Activated CD4-positive, alpha-beta memory T cell treated with anti-CD3 and anti-CD28 coated beads for 36 hours (primary cell): ENCODE measurements at regions of chr13 and their contacts with region 1.

Region 1: GRCh38 chr13:40666045-40666904 is at the start of gene FOXO1:
- DNase-seq: peak; percentile 91
- H3K4me3 Mint-ChIP-seq: peak within 1 kb of the TSS; percentile 91
- H3K27ac Mint-ChIP-seq: peak within 1 kb of the TSS; percentile 96
- H3K4me1 Mint-ChIP-seq: peaks cover 34% of the 10 kb centered on the region
- H3K27me3 Mint-ChIP-seq: no peaks in the 10 kb centered on the region
- total RNA-seq, gene FOXO1: 34.2 to 34.5 TPM

Region 2: DNA sequence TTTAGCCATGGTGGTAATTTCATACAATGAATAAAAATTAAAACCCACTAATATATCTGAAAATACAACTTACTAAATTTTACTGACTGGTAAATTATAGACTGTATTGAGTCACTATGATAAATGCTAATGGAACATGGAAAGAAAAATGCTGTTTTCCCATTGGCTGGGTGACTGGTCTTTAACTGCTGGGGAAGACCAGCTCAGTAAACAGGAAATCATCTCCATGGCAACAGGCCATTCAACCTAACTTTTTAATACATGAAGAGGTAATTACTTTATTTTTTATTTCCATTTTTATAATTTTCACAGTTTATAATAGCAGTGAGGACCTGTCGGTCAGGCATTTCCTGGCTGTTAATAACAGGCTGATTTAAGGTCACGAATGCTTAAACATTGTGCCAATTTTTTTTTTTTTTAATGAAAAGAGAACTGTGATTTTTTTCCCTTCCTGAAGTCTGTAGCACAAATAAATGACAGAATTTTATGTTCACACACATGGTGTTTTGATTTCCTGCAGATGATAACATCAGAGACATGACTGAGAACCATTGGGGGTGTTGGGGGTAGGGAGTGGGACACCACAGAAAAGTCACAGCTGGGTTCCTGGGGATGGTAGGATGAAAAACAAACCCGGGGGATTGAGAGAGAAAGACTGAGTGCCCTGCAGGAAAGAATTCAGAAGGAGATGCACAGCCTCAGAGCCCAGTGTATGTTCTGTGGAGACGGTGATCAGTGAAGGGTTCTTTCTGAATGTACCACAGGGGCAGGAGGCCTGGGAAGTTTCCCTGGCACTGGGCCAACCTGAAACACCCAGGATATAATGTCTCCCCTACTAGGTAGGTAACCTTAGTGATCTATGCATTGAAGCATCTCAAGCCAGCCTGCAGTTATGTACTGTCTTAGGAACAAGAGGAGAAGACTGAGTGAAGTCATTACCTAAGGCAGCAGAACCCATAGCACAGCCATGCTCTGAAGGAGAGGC is 713.7 kb before region 1 on chr13:
- CTCF ChIA-PET with region 1: no interaction called
- POLR2A ChIA-PET with region 1: no interaction called
- intact Hi-C with region 1: loop called (anchors 5 kb)
- DNase-seq: no peak
- H3K4me3 Mint-ChIP-seq: no peak overlapping the region
- H3K27ac Mint-ChIP-seq: no peak overlapping the region
- H3K4me1 Mint-ChIP-seq: peaks cover 44% of the 10 kb centered on the region
- H3K27me3 Mint-ChIP-seq: no peaks in the 10 kb centered on the region

Region 3: DNA sequence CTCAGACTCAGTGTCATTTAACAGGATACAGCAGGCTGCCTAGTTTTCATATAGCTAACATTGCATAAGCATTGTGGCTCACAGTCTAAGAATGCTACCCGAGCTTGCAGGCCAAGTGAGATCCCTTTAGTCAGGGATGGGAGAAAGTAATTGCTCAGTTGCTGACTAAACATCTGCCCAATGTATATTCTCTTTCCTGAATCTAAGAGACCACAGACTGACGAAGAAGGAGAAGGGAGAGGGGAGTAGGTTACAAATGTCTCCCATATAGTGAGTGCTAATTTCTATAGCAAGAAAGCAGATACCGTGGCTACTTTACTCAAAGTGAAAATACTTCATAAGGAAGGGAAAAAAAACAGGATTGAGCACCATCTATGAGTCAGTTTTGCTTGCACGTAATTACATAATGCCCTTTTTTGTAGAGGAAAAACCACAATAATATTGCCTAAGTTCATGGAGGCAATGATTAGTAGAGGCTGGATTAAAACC is 556.9 kb before region 1 on chr13:
- CTCF ChIA-PET with region 1: no interaction called
- POLR2A ChIA-PET with region 1: no interaction called
- intact Hi-C with region 1: loop called (anchors 1 kb)
- DNase-seq: peak; percentile 51
- H3K4me3 Mint-ChIP-seq: no peak overlapping the region
- H3K27ac Mint-ChIP-seq: peak overlapping the region; percentile 18
- H3K4me1 Mint-ChIP-seq: peaks cover 33% of the 10 kb centered on the region
- H3K27me3 Mint-ChIP-seq: no peaks in the 10 kb centered on the region

Region 4: DNA sequence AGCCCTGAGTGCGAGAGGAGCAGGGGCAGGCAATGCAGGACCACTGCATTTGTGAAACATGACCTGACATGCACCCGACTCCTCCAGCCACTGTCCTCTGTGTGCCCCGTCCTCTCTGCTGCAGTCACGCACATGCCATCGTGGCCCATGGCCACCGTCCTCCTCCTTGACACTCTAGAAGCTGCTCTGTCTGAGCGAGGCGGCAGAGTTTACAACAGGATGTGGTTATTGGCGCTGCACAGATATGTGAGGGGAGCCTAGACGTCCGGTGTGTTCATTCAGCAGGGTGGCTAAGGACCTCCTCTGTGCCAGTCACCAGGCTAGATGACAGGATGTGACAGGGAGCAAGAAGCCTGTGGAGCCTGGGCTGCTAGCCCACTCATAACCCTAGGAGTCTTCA is 277.7 kb before region 1 on chr13:
- CTCF ChIA-PET with region 1: interaction called, 5 read pairs
- POLR2A ChIA-PET with region 1: interaction called, 5 read pairs
- intact Hi-C with region 1: loop called (anchors 1 kb)
- DNase-seq: peak; percentile 92
- H3K4me3 Mint-ChIP-seq: peak overlapping the region; percentile 68
- H3K27ac Mint-ChIP-seq: peak overlapping the region; percentile 94
- H3K4me1 Mint-ChIP-seq: peaks cover 29% of the 10 kb centered on the region
- H3K27me3 Mint-ChIP-seq: no peaks in the 10 kb centered on the region

Region 5: DNA sequence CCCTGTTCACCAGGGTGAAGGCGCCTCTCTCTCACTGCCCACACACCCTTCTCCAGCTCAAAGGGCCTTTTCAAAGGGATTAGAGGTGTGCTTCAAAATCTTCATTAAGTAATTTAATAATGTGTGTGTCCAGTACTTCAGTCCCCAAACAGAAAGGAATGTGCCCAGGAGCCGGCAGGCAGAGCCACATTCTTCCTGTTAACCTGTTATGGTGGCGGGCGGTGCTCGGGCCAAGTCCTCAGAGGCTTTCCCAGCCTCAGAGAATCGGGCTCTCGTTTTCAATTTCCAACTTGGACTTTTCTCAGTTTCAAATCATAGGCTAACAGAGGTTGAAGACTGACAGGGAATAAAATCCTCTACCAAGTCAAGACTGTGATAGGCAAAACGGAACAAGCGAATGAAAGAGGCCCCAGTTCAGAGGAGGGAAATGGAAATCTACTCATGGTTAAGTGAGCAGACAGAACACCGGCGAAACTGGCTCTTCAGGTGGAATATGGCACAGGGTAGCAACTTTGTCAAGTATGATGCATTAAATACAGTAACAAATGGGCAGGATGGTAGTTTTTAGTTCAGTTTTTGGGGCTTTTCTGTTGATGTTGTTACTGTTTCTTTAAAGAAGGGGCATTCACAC is 68.4 kb before region 1 on chr13:
- CTCF ChIA-PET with region 1: no interaction called
- POLR2A ChIA-PET with region 1: interaction called, 20 read pairs
- intact Hi-C with region 1: loop called (anchors 1 kb)
- DNase-seq: peak; percentile 24
- H3K4me3 Mint-ChIP-seq: peak overlapping the region; percentile 39
- H3K27ac Mint-ChIP-seq: peak overlapping the region; percentile 85
- H3K4me1 Mint-ChIP-seq: peaks cover 87% of the 10 kb centered on the region
- H3K27me3 Mint-ChIP-seq: no peaks in the 10 kb centered on the region

Region 6: DNA sequence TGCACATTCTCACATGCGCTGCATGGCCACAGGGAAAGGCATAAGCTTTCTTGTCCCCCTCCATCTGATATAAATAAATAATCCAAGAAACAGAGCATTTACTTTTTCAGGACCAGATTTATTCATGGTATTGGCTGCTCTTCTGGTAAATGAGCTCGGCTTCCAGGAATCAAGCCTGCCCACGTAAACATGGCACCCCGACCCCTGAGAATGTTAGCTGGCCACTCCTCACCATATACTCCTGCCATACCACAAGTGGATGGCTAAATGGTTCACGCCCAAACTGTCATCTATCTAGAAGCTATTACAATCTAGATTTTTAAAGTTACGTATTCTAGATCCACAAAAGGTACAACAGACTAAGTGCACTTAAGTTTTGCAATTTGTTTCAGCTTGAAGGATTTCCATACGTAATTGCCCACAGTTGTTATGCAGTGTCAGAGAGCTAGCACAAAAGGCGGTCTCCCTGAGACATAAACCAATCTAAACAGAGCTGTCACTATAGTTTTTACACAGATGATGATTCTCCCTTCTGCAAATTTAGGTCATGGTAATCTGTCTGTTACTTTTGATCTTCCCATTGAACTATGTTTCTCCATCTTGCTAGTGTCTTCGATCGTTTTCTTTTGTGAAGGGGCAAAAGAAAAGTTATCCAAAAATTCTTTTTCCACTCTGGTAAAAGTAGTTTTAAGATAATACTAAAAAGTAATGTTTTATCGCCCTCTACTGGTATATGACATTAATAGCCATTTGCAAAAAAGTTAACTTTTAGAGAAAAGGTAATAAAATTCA is 16.4 kb after region 1 on chr13:
- CTCF ChIA-PET with region 1: interaction called, 15 read pairs
- POLR2A ChIA-PET with region 1: interaction called, 3 read pairs
- intact Hi-C with region 1: no loop called
- DNase-seq: no peak
- H3K4me3 Mint-ChIP-seq: no peak overlapping the region
- H3K27ac Mint-ChIP-seq: no peak overlapping the region
- H3K4me1 Mint-ChIP-seq: peaks cover 7% of the 10 kb centered on the region
- H3K27me3 Mint-ChIP-seq: no peaks in the 10 kb centered on the region